PC-9 (cell line): ENCODE measurements at regions of chr1 and their contacts with region 1.

Region 1: DNA sequence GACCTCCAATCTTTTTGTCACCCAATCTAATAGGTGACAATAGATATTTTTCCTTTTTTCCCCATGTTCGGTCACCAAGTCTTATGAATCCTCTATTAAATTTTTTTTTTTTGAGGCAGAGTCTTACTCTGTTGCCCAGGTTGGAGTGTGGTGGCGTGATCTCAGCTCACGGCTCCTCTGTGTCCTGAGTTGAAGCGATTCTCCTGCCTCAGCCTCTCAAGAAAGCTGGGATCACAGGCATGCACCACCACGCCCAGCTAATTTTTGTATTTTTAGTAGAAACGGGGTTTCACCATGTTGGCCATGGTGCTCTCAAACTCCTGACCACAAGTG is 42.5 kb upstream of the MTF1 start:
- DNase-seq: no peak
- H3K4me3 ChIP-seq: no peak overlapping the region
- H3K27ac ChIP-seq: no peak overlapping the region
- H3K4me1 ChIP-seq: no peaks in the 10 kb centered on the region
- H3K27me3 ChIP-seq: no peaks in the 10 kb centered on the region
- CTCF ChIP-seq: no peak

Region 2: GRCh38 chr1:37931361-37932158 is 29.7 kb after region 1 on chr1:
- CTCF ChIA-PET with region 1: no interaction called
- POLR2A ChIA-PET with region 1: interaction called, 7 read pairs
- intact Hi-C with region 1: loop called (anchors 1 kb)
- DNase-seq: peak; percentile 96 to 100
- H3K4me3 ChIP-seq: peak overlapping the region; percentile 78
- H3K27ac ChIP-seq: peak overlapping the region; percentile 28; the same call in 1 of the 2 replicates
- H3K4me1 ChIP-seq: peaks cover 38% of the 10 kb centered on the region
- H3K27me3 ChIP-seq: no peaks in the 10 kb centered on the region
- CTCF ChIP-seq: no peak

Region 3: GRCh38 chr1:37987679-37988078 is 85.8 kb after region 1 on chr1:
- CTCF ChIA-PET with region 1: no interaction called
- POLR2A ChIA-PET with region 1: no interaction called
- intact Hi-C with region 1: no loop called
- DNase-seq: no peak
- H3K4me3 ChIP-seq: no peak overlapping the region
- H3K27ac ChIP-seq: no peak overlapping the region
- H3K4me1 ChIP-seq: peaks cover 10% of the 10 kb centered on the region
- H3K27me3 ChIP-seq: no peaks in the 10 kb centered on the region
- CTCF ChIP-seq: no peak